Heart right ventricle (tissue), 16 donors: ENCODE measurements at regions of chr1 and their contacts with region 1.

Region 1: GRCh38 chr1:81834921-81835698 is 34.4 kb downstream of the ADGRL2 start:
- DNase-seq: peak in 1 of 2 donors; percentile 41
- ATAC-seq: peak; percentile 68 to 93 (median 88)
- H3K4me3 ChIP-seq: peak overlapping the region in 4 of 10 donors; percentile 1 to 28 (median 3)
- H3K27ac ChIP-seq: peak overlapping the region in 4 of 10 donors; percentile 2 to 29 (median 18)
- H3K4me1 ChIP-seq: peaks cover 0 to 66% (median 44%) of the 10 kb centered on the region in 9 donors
- H3K27me3 ChIP-seq: no peaks in the 10 kb centered on the region
- CTCF ChIP-seq: no peak

Region 2: GRCh38 chr1:81254560-81254959 is 580.5 kb before region 1 on chr1:
- intact Hi-C with region 1: no loop called
- DNase-seq: no peak
- ATAC-seq: no peak
- H3K4me3 ChIP-seq: no peak overlapping the region
- H3K27ac ChIP-seq: no peak overlapping the region
- H3K4me1 ChIP-seq: no peaks in the 10 kb centered on the region
- H3K27me3 ChIP-seq: no peaks in the 10 kb centered on the region
- CTCF ChIP-seq: no peak

Region 3: GRCh38 chr1:81978945-81979344 is 143.8 kb after region 1 on chr1:
- intact Hi-C with region 1: loop called in 1 of 10 experiments (anchors 10 kb)
- DNase-seq: no peak
- ATAC-seq: no peak
- H3K4me3 ChIP-seq: no peak overlapping the region
- H3K27ac ChIP-seq: no peak overlapping the region
- H3K4me1 ChIP-seq: peaks cover 0 to 29% (median 6%) of the 10 kb centered on the region in 9 donors
- H3K27me3 ChIP-seq: no peaks in the 10 kb centered on the region
- CTCF ChIP-seq: no peak